Transverse colon (tissue), 4 donors: ENCODE measurements at regions of chr15 and their contacts with region 1.

Region 1: GRCh38 chr15:26157081-26157480 is 294.0 kb upstream of the ATP10A start:
- DNase-seq: no peak
- H3K4me3 ChIP-seq: no peak overlapping the region
- H3K27ac ChIP-seq: peak overlapping the region in 1 of 4 donors; percentile 23
- H3K4me1 ChIP-seq: no peaks in the 10 kb centered on the region
- H3K27me3 ChIP-seq: no peaks in the 10 kb centered on the region
- CTCF ChIP-seq: no peak
- EP300 ChIP-seq: no peak
- POLR2A ChIP-seq: no peak

Region 2: DNA sequence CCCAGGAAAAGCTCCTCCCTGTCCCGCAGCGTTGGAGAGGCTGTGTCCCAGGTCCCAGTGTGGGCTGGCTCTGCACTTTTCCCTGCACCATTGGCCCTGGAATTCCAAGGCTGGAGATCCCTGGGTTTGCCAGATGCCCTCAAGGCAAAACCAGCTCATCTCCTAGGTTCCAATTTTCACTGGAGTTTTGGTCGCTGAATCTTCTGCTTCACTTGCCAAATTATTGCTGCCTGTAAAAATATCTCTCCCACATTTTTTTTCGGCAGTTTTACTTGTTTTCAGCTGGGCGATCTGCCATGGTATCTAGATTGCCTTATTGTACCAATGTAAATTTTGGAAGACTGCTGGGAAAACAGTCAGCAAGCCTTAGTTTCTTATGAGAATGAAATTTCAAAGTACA is 143.1 kb before region 1 on chr15:
- in situ Hi-C with region 1: loop called in 1 of 4 experiments (anchors 25 kb)
- intact Hi-C with region 1: no loop called
- DNase-seq: no peak
- H3K4me3 ChIP-seq: no peak overlapping the region
- H3K27ac ChIP-seq: no peak overlapping the region
- H3K4me1 ChIP-seq: no peaks in the 10 kb centered on the region
- H3K27me3 ChIP-seq: no peaks in the 10 kb centered on the region
- CTCF ChIP-seq: no peak
- EP300 ChIP-seq: no peak
- POLR2A ChIP-seq: no peak

Region 3: DNA sequence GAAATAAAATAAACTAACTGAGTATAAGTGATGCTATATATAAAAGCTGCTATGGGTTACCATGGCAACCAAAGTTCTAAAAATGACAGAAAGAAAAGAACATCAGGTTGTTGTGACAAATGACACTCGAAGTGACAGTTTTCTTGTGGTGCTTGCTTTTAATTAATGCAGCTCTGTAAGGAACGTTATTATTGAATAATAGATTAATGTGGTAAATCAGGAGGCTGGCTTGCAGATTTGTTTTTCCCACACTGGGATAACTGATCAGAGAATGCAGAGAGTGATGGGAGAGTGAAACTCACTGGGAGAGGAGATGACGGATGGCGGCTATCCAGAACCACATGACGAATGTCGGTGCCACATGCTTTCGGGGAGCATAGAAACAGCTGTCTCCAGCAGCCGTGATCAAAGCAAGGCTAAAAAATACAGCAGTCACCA is 87.0 kb before region 1 on chr15:
- in situ Hi-C with region 1: no loop called
- intact Hi-C with region 1: no loop called
- DNase-seq: no peak
- H3K4me3 ChIP-seq: no peak overlapping the region
- H3K27ac ChIP-seq: no peak overlapping the region
- H3K4me1 ChIP-seq: no peaks in the 10 kb centered on the region
- H3K27me3 ChIP-seq: no peaks in the 10 kb centered on the region
- CTCF ChIP-seq: no peak
- EP300 ChIP-seq: no peak
- POLR2A ChIP-seq: no peak